Activated T-helper 1 cell treated with anti-CD3 and anti-CD28 coated beads, Interleukin-12 subunit alpha, Interleukin-12 subunit beta, Interleukin-2, Interleukin-4 antibody, amounts not matched to agents 30 ng/mL and 10 ng/mL and 1 ng/mL, durations not matched to agents 14 hours and 24 hours and 36 hours (primary cell): ENCODE measurements at regions of chr2 and their contacts with region 1.

Region 1: GRCh38 chr2:46887028-46887885 is 28.3 kb downstream of the MCFD2 start:
- DNase-seq: no peak
- H3K4me3 Mint-ChIP-seq: no peak overlapping the region
- H3K27ac Mint-ChIP-seq: no peak overlapping the region
- H3K4me1 Mint-ChIP-seq: peaks cover 10% of the 10 kb centered on the region
- H3K27me3 Mint-ChIP-seq: peaks cover 16% of the 10 kb centered on the region

Region 2: DNA sequence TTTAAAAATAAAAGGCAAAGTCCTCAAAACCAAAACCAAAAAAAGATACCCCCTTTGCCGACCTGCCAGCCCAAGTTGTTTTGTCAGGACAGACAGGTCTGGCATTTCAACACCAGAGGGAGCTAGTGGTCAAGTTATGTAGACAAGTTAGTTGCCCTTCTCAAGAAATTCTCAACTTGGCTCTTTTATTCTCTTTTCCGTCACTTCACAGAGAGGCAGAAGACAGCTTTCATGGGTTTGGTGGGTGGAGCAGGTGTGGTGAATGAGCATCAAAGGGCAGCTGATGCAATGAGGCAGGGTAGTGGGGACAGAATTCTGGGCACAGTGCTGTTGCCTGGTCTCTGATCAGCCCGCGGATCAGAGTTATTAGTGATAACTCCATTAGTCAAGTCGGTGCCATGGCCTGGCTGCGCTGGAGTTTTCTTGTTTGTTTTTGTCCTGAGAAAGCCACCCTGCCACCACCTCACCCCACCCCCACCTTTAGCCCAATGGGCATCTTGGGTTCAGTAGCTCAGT is 893.7 kb before region 1 on chr2:
- intact Hi-C with region 1: loop called (anchors 5 kb)
- DNase-seq: peak; percentile 44
- H3K4me3 Mint-ChIP-seq: no peak overlapping the region
- H3K27ac Mint-ChIP-seq: no peak overlapping the region
- H3K4me1 Mint-ChIP-seq: peaks cover 5% of the 10 kb centered on the region
- H3K27me3 Mint-ChIP-seq: peaks cover 3% of the 10 kb centered on the region

Region 3: GRCh38 chr2:47401759-47402554 is 514.7 kb after region 1 on chr2:
- intact Hi-C with region 1: no loop called
- DNase-seq: no peak
- H3K4me3 Mint-ChIP-seq: peak overlapping the region; percentile 97
- H3K27ac Mint-ChIP-seq: peak overlapping the region; percentile 96
- H3K4me1 Mint-ChIP-seq: peaks cover 28% of the 10 kb centered on the region
- H3K27me3 Mint-ChIP-seq: no peaks in the 10 kb centered on the region